ENCODE measurements at regions of chr3 and their contacts with region 1.

Region 1: DNA sequence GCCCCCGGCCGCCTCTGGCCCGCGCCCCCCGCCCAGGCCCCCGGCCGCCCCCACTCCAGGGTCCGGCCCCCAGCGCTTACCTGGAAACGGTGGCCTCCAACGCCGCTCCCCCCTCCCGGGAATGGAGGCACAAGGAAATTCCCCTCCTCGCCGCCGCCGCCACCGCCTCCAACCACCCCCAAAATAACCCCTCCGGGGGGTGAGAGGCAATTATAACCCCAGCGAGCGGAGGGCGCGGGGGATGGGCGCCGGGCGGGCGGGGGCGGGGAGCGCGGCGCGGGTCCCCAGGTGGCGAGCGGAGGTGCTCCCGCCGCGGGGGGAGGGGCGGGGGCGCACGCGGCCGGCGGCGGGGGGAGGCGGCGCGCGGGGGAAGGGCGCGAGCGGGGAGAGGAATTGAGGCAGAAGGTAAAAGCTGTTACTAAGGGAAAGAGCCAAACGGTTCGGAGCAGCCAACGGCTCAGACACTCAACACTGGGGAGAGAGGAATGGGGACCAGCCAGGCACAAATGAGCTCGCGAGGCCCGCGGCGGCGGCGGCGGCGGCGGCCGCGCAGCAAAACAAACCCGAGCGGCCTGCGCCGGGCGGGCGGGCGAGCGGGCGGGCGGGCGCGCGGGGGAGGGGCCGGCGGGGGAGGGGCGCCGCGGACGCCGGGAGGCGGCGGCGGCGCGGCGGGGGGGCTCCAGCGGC is at the start of gene TBL1XR1:
- DNase-seq: peak; percentile 95
- H3K4me3 Mint-ChIP-seq: peak within 1 kb of the TSS; percentile 97
- H3K27ac Mint-ChIP-seq: peak within 1 kb of the TSS; percentile 89
- H3K4me1 Mint-ChIP-seq: peaks cover 30% of the 10 kb centered on the region
- H3K27me3 Mint-ChIP-seq: no peaks in the 10 kb centered on the region
- CTCF ChIP-seq: no peak
- total RNA-seq, gene TBL1XR1: 171 and 178 TPM in 2 replicates

Region 2: GRCh38 chr3:177050501-177051237 is 146.5 kb before region 1 on chr3:
- CTCF ChIA-PET with region 1: interaction called, 14 read pairs
- POLR2A ChIA-PET with region 1: interaction called, 24 read pairs
- intact Hi-C with region 1: loop called (anchors 1 kb)
- DNase-seq: peak; percentile 53
- H3K4me3 Mint-ChIP-seq: no peak overlapping the region
- H3K27ac Mint-ChIP-seq: no peak overlapping the region
- H3K4me1 Mint-ChIP-seq: peaks cover 5% of the 10 kb centered on the region
- H3K27me3 Mint-ChIP-seq: no peaks in the 10 kb centered on the region
- CTCF ChIP-seq: peak; percentile 52

Region 3: GRCh38 chr3:177126015-177126773 is 71.0 kb before region 1 on chr3:
- CTCF ChIA-PET with region 1: interaction called, 3 read pairs
- POLR2A ChIA-PET with region 1: interaction called, 9 read pairs
- intact Hi-C with region 1: loop called (anchors 2 kb)
- DNase-seq: peak; percentile 88
- H3K4me3 Mint-ChIP-seq: no peak overlapping the region
- H3K27ac Mint-ChIP-seq: peak overlapping the region; percentile 35
- H3K4me1 Mint-ChIP-seq: peaks cover 39% of the 10 kb centered on the region
- H3K27me3 Mint-ChIP-seq: no peaks in the 10 kb centered on the region
- CTCF ChIP-seq: no peak

Region 4: GRCh38 chr3:177179281-177180067 is 17.7 kb before region 1 on chr3:
- CTCF ChIA-PET with region 1: interaction called, 7 read pairs
- POLR2A ChIA-PET with region 1: interaction called, 21 read pairs
- intact Hi-C with region 1: no loop called
- DNase-seq: peak; percentile 11
- H3K4me3 Mint-ChIP-seq: no peak overlapping the region
- H3K27ac Mint-ChIP-seq: no peak overlapping the region
- H3K4me1 Mint-ChIP-seq: peaks cover 35% of the 10 kb centered on the region
- H3K27me3 Mint-ChIP-seq: no peaks in the 10 kb centered on the region
- CTCF ChIP-seq: no peak

Region 5: GRCh38 chr3:177249203-177249602 is 52.0 kb after region 1 on chr3:
- CTCF ChIA-PET with region 1: no interaction called
- POLR2A ChIA-PET with region 1: no interaction called
- intact Hi-C with region 1: no loop called
- DNase-seq: no peak
- H3K4me3 Mint-ChIP-seq: no peak overlapping the region
- H3K27ac Mint-ChIP-seq: no peak overlapping the region
- H3K4me1 Mint-ChIP-seq: no peaks in the 10 kb centered on the region
- H3K27me3 Mint-ChIP-seq: no peaks in the 10 kb centered on the region
- CTCF ChIP-seq: no peak

Region 6: GRCh38 chr3:177448987-177449975 is 252.1 kb after region 1 on chr3:
- CTCF ChIA-PET with region 1: interaction called, 9 read pairs
- POLR2A ChIA-PET with region 1: interaction called, 27 read pairs
- intact Hi-C with region 1: no loop called
- DNase-seq: peak; percentile 95
- H3K4me3 Mint-ChIP-seq: peak overlapping the region; percentile 43
- H3K27ac Mint-ChIP-seq: peak overlapping the region; percentile 63
- H3K4me1 Mint-ChIP-seq: peaks cover 21% of the 10 kb centered on the region
- H3K27me3 Mint-ChIP-seq: no peaks in the 10 kb centered on the region
- CTCF ChIP-seq: no peak

Region 7: GRCh38 chr3:177816667-177817208 is 619.6 kb after region 1 on chr3:
- CTCF ChIA-PET with region 1: interaction called, 3 read pairs
- POLR2A ChIA-PET with region 1: interaction called, 5 read pairs
- intact Hi-C with region 1: loop called (anchors 1 kb)
- DNase-seq: peak; percentile 98
- H3K4me3 Mint-ChIP-seq: peak overlapping the region; percentile 48
- H3K27ac Mint-ChIP-seq: peak overlapping the region; percentile 89
- H3K4me1 Mint-ChIP-seq: peaks cover 40% of the 10 kb centered on the region
- H3K27me3 Mint-ChIP-seq: no peaks in the 10 kb centered on the region
- CTCF ChIP-seq: peak; percentile 34

Region 8: GRCh38 chr3:178385280-178385952 is 1188.2 kb after region 1 on chr3:
- CTCF ChIA-PET with region 1: interaction called, 3 read pairs
- POLR2A ChIA-PET with region 1: no interaction called
- intact Hi-C with region 1: loop called (anchors 2 kb)
- DNase-seq: peak; percentile 51
- H3K4me3 Mint-ChIP-seq: no peak overlapping the region
- H3K27ac Mint-ChIP-seq: no peak overlapping the region
- H3K4me1 Mint-ChIP-seq: peaks cover 18% of the 10 kb centered on the region
- H3K27me3 Mint-ChIP-seq: no peaks in the 10 kb centered on the region
- CTCF ChIP-seq: peak; percentile 69

Measured in MCF 10A (cell line).